HCT116 (cell line): ENCODE measurements at regions of chr4 and their contacts with region 1.

Region 1: GRCh38 chr4:55546756-55547465 is at the start of gene CLOCK:
- DNase-seq: peak; percentile 68
- ATAC-seq: peak; percentile 60
- H3K4me3 ChIP-seq: peak within 1 kb of the TSS; percentile 73 to 80
- H3K27ac ChIP-seq: peak within 1 kb of the TSS; percentile 100
- H3K4me1 ChIP-seq: peaks cover 57 to 68% of the 10 kb centered on the region in 2 experiments
- H3K27me3 ChIP-seq: no peaks in the 10 kb centered on the region
- CTCF ChIP-seq: peak in 2 of 3 experiments; percentile 35 to 49; a peak in 4 of 6 replicates
- POLR2A ChIP-seq: peak; percentile 47
- RAD21 ChIP-seq: no peak; the same call in 1 of the 2 replicates
- total RNA-seq, gene CLOCK: 38.7 TPM

Region 2: GRCh38 chr4:55444827-55445226 is 102.1 kb before region 1 on chr4:
- CTCF ChIA-PET with region 1: no interaction called
- POLR2A ChIA-PET with region 1: interaction called, 6 read pairs
- RAD21 ChIA-PET with region 1: no interaction called
- intact Hi-C with region 1: loop called (anchors 1 kb)
- DNase-seq: peak; percentile 13
- ATAC-seq: peak; percentile 52; the same call in 1 of the 2 replicates
- H3K4me3 ChIP-seq: no peak overlapping the region
- H3K27ac ChIP-seq: no peak overlapping the region
- H3K4me1 ChIP-seq: 0 out of 4 replicates have a peak, but pooled peaks cover 0 to 2% of the 10 kb centered on the region in 2 experiments
- H3K27me3 ChIP-seq: no peaks in the 10 kb centered on the region
- CTCF ChIP-seq: peak in 2 of 3 experiments; percentile 41 to 47; a peak in 3 of 6 replicates
- POLR2A ChIP-seq: no peak
- RAD21 ChIP-seq: peak; percentile 77

Region 3: DNA sequence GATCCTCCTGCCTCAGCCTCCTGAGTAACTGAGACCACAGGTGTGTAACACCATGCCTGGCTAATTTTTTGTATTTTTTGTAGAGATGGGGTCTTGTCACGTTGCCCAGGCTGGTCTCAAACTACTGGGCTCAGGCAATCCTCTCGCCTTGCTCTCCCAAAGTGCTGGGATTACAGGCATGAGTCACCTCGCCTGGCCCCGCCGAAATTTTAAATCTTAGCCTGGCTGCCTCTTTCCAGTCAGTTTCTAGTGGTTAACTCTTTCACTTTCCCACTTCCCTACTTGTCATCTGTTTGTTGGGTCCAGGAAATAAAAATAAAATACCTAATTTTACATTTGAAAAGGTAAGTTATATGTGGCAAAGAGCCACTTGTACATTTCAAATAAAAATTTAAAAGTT is 88.7 kb before region 1 on chr4:
- CTCF ChIA-PET with region 1: no interaction called
- POLR2A ChIA-PET with region 1: no interaction called
- RAD21 ChIA-PET with region 1: no interaction called
- intact Hi-C with region 1: loop called (anchors 5 kb)
- DNase-seq: no peak
- ATAC-seq: peak; percentile 84
- H3K4me3 ChIP-seq: no peak overlapping the region; a peak in 1 of 4 replicates
- H3K27ac ChIP-seq: peak overlapping the region; percentile 7; the same call in 1 of the 2 replicates
- H3K4me1 ChIP-seq: peaks cover 4 to 22% of the 10 kb centered on the region in 2 experiments; a peak in 3 of 4 replicates
- H3K27me3 ChIP-seq: no peaks in the 10 kb centered on the region
- CTCF ChIP-seq: no peak
- POLR2A ChIP-seq: no peak
- RAD21 ChIP-seq: no peak

Region 4: DNA sequence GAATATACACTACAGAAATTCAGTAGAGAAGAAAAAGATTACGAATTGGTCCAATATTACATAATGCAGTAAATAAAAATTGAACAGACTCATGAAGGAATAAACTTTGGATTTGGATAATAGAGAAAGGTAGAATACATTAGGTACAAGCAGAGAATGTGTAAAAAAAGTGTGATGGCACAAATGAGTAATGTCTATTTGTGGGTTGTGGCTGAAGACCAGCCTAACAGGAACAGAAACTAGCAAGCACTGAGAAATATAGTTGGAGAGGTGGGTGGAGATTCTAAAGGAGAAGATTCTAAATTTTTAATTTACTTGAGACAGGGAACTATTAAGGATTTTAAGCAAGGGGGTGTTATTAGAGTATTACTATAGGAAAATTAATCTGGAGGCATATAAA is 15.0 kb after region 1 on chr4:
- CTCF ChIA-PET with region 1: no interaction called
- POLR2A ChIA-PET with region 1: no interaction called
- RAD21 ChIA-PET with region 1: no interaction called
- intact Hi-C with region 1: no loop called
- DNase-seq: no peak
- ATAC-seq: no peak
- H3K4me3 ChIP-seq: no peak overlapping the region
- H3K27ac ChIP-seq: no peak overlapping the region
- H3K4me1 ChIP-seq: no peaks in the 10 kb centered on the region
- H3K27me3 ChIP-seq: no peaks in the 10 kb centered on the region
- CTCF ChIP-seq: no peak
- POLR2A ChIP-seq: no peak
- RAD21 ChIP-seq: no peak

Region 5: DNA sequence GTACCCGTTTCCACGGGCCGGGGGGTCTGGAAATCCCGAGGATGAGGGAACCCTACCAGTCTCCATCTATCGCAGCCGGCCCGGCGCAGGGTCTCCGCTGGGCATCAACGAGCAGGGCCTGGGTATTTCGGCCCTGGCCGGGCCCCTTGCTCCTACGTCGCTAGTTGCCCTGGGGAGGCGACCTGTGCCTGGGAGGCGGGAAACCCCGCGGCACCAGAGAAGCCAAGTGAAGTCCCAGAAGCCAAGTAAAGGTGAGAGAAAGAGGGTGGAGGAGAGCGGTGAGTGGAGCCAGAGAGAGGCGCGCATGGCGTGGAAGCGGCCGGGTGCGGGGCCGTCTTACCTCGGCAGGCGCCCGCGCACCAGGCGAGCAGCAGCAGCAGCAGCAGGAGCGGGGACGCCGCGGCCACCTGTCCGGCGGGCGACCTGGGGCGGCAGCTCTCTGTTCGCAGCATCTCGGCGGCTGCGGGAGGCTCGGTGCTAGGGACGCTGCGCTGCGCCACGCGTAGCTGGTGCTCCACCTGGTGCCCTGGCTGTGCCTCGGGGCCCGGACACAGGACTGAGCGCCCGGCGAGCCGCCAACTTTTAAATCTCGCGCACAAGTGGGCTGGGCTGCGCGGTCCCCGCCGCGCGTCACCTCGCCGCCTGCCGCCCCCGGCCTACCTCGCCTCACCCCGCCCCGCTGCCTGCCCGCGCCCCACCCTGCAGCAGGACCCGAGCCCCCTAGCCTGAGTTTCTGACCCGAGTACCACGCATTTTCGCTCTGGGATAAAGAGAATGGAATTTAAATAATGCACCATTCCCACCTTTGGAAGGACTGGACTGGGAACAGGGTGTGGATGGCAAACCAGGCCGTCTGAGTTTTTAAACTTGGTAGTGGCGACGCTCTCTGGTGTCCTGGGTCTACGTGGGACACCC is 89.1 kb after region 1 on chr4 and contains the start of gene NMU:
- CTCF ChIA-PET with region 1: no interaction called
- POLR2A ChIA-PET with region 1: no interaction called
- RAD21 ChIA-PET with region 1: no interaction called
- intact Hi-C with region 1: loop called (anchors 10 kb)
- DNase-seq: peak; percentile 67
- ATAC-seq: peak; percentile 93
- H3K4me3 ChIP-seq: peak within 1 kb of the TSS; percentile 77 to 78
- H3K27ac ChIP-seq: peak within 1 kb of the TSS; percentile 58
- H3K4me1 ChIP-seq: peaks cover 22 to 34% of the 10 kb centered on the region in 2 experiments
- H3K27me3 ChIP-seq: no peaks in the 10 kb centered on the region
- CTCF ChIP-seq: 0 out of 6 replicates have a peak, but pooled peaks of 1 of the 3 experiments have one; percentile 6
- POLR2A ChIP-seq: peak; percentile 73
- RAD21 ChIP-seq: peak; percentile 64
- total RNA-seq, gene NMU: 81.1 TPM

Region 6: DNA sequence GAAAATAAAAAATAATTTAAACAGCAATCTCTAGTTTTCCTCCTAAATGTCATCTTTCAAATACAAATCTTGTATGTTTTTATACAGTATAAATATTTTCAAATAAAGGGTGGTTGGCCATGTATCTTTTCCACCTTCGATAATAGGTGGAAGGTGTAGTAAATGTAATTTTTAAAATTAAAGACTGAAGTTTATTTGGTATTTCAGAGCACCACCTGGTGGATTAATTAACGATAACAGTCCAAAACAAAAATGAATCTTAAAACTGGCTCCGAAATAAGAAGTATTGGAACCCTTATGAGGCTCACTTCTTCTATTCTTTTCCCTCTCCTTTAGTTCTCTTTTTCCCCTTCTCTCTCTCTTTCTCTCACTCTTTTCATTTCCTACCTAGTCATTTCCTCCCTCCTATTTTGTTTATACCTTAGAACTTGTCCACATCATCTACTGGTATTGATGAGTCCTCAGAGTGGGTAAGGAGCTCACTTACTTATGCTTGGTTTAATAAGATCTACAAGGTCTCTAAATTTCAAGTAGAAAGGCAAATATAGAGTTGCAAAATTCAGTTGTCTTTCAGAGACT is 189.8 kb after region 1 on chr4:
- CTCF ChIA-PET with region 1: interaction called, 4 read pairs
- POLR2A ChIA-PET with region 1: interaction called, 3 read pairs
- RAD21 ChIA-PET with region 1: no interaction called
- intact Hi-C with region 1: loop called (anchors 10 kb)
- DNase-seq: peak; percentile 23
- ATAC-seq: no peak
- H3K4me3 ChIP-seq: no peak overlapping the region
- H3K27ac ChIP-seq: no peak overlapping the region
- H3K4me1 ChIP-seq: peaks cover 5 to 18% of the 10 kb centered on the region in 2 experiments
- H3K27me3 ChIP-seq: no peaks in the 10 kb centered on the region
- CTCF ChIP-seq: peak; percentile 23 to 58 (median 54); a peak in 4 of 6 replicates
- POLR2A ChIP-seq: no peak
- RAD21 ChIP-seq: peak; percentile 79

Region 7: GRCh38 chr4:55791666-55792065 is 244.8 kb after region 1 on chr4:
- CTCF ChIA-PET with region 1: no interaction called
- POLR2A ChIA-PET with region 1: no interaction called
- RAD21 ChIA-PET with region 1: no interaction called
- intact Hi-C with region 1: no loop called
- DNase-seq: no peak
- ATAC-seq: peak; percentile 49; the same call in 1 of the 2 replicates
- H3K4me3 ChIP-seq: no peak overlapping the region
- H3K27ac ChIP-seq: no peak overlapping the region
- H3K4me1 ChIP-seq: peaks cover 0 to 8% of the 10 kb centered on the region in 2 experiments; a peak in 2 of 4 replicates
- H3K27me3 ChIP-seq: no peaks in the 10 kb centered on the region
- CTCF ChIP-seq: no peak
- POLR2A ChIP-seq: no peak
- RAD21 ChIP-seq: no peak

Region 8: GRCh38 chr4:56062603-56063031 is 515.7 kb after region 1 on chr4:
- CTCF ChIA-PET with region 1: no interaction called
- POLR2A ChIA-PET with region 1: no interaction called
- RAD21 ChIA-PET with region 1: no interaction called
- intact Hi-C with region 1: no loop called
- DNase-seq: no peak
- ATAC-seq: no peak
- H3K4me3 ChIP-seq: no peak overlapping the region
- H3K27ac ChIP-seq: no peak overlapping the region
- H3K4me1 ChIP-seq: no peaks in the 10 kb centered on the region
- H3K27me3 ChIP-seq: no peaks in the 10 kb centered on the region
- CTCF ChIP-seq: no peak
- POLR2A ChIP-seq: no peak
- RAD21 ChIP-seq: no peak

Region 9: DNA sequence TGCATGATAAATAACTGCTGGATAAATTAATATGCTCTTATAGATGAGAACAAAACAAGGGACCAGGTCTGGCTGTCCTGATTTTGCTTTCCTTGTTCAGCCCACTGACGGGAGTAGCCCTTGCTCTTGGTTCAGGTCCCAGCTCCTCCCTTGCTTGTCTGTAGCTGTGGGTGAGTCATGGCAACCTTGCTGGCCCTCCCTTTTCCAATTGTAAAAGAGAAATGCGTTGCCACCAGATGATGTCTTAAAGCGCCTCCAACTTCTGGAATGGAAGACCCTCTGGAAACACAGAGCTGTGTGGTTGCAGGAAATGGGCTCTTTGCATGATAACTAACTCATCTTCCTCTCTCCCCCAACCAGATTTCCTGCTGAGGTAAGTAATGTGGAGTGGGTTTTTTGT is 669.0 kb after region 1 on chr4:
- CTCF ChIA-PET with region 1: no interaction called
- POLR2A ChIA-PET with region 1: no interaction called
- RAD21 ChIA-PET with region 1: no interaction called
- intact Hi-C with region 1: no loop called
- DNase-seq: peak; percentile 33
- ATAC-seq: peak; percentile 92
- H3K4me3 ChIP-seq: no peak overlapping the region
- H3K27ac ChIP-seq: no peak overlapping the region
- H3K4me1 ChIP-seq: peaks cover 6 to 16% of the 10 kb centered on the region in 2 experiments; a peak in 3 of 4 replicates
- H3K27me3 ChIP-seq: no peaks in the 10 kb centered on the region
- CTCF ChIP-seq: no peak
- POLR2A ChIP-seq: no peak
- RAD21 ChIP-seq: no peak